ENCODE measurements at regions of chr13 and their contacts with region 1.

Region 1: GRCh38 chr13:77480066-77480465 is 55.4 kb upstream of the SCEL start:
- DNase-seq: no peak
- ATAC-seq: no peak
- H3K4me3 ChIP-seq: no peak overlapping the region
- H3K4me3 Mint-ChIP-seq: no peak overlapping the region
- H3K27ac ChIP-seq: no peak overlapping the region
- H3K27ac Mint-ChIP-seq: no peak overlapping the region
- H3K4me1 ChIP-seq: no peaks in the 10 kb centered on the region
- H3K4me1 Mint-ChIP-seq: peaks cover 10% of the 10 kb centered on the region
- H3K27me3 ChIP-seq: no peaks in the 10 kb centered on the region
- H3K27me3 Mint-ChIP-seq: no peaks in the 10 kb centered on the region
- CTCF ChIP-seq: no peak

Region 2: GRCh38 chr13:77124423-77124822 is 355.6 kb before region 1 on chr13:
- CTCF ChIA-PET with region 1: no interaction called
- POLR2A ChIA-PET with region 1: no interaction called
- intact Hi-C with region 1: loop called in 1 of 2 experiments (anchors 5 kb)
- DNase-seq: no peak
- ATAC-seq: no peak
- H3K4me3 ChIP-seq: no peak overlapping the region
- H3K4me3 Mint-ChIP-seq: no peak overlapping the region
- H3K27ac ChIP-seq: no peak overlapping the region
- H3K27ac Mint-ChIP-seq: no peak overlapping the region
- H3K4me1 ChIP-seq: no peaks in the 10 kb centered on the region
- H3K4me1 Mint-ChIP-seq: no peaks in the 10 kb centered on the region
- H3K27me3 ChIP-seq: no peaks in the 10 kb centered on the region
- H3K27me3 Mint-ChIP-seq: no peaks in the 10 kb centered on the region
- CTCF ChIP-seq: no peak

Region 3: DNA sequence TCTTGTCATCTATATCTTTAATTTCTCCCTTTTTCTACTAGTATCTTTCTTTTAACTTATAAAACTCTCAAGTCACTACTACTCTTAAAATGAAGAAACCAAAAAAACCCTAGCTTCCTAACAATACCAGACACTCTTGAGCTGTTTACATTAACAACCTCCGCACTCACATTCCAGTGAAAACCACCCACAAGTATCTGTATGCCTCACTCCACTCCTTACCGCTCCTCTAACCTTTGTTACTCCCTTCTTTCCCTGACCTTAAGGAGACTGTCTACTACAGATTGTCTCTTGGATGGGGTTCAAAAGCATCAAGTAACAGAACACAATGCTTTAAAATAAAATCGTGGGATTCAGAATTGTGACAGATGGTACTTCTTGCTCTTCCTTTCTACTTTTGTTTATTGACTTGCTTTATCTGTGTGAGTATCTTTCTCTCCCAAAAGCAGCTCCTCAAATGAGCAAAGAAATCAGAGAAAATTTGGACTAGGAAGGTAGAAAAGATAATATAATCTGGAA is 343.1 kb before region 1 on chr13:
- CTCF ChIA-PET with region 1: no interaction called
- POLR2A ChIA-PET with region 1: no interaction called
- intact Hi-C with region 1: no loop called
- DNase-seq: no peak
- ATAC-seq: no peak
- H3K4me3 ChIP-seq: no peak overlapping the region
- H3K4me3 Mint-ChIP-seq: no peak overlapping the region
- H3K27ac ChIP-seq: no peak overlapping the region
- H3K27ac Mint-ChIP-seq: peak overlapping the region; percentile 2
- H3K4me1 ChIP-seq: no peaks in the 10 kb centered on the region
- H3K4me1 Mint-ChIP-seq: no peaks in the 10 kb centered on the region
- H3K27me3 ChIP-seq: no peaks in the 10 kb centered on the region
- H3K27me3 Mint-ChIP-seq: no peaks in the 10 kb centered on the region
- CTCF ChIP-seq: no peak

Region 4: GRCh38 chr13:77184455-77184854 is 295.6 kb before region 1 on chr13:
- CTCF ChIA-PET with region 1: interaction called, 12 read pairs
- POLR2A ChIA-PET with region 1: no interaction called
- intact Hi-C with region 1: loop called in 1 of 2 experiments (anchors 5 kb)
- DNase-seq: peak in 1 of 9 experiments; percentile 5
- ATAC-seq: peak; percentile 20
- H3K4me3 ChIP-seq: no peak overlapping the region
- H3K4me3 Mint-ChIP-seq: no peak overlapping the region
- H3K27ac ChIP-seq: no peak overlapping the region
- H3K27ac Mint-ChIP-seq: peak overlapping the region; percentile 75
- H3K4me1 ChIP-seq: no peaks in the 10 kb centered on the region
- H3K4me1 Mint-ChIP-seq: peaks cover 18% of the 10 kb centered on the region
- H3K27me3 ChIP-seq: no peaks in the 10 kb centered on the region
- H3K27me3 Mint-ChIP-seq: no peaks in the 10 kb centered on the region
- CTCF ChIP-seq: no peak

Region 5: GRCh38 chr13:77274126-77274525 is 205.9 kb before region 1 on chr13:
- CTCF ChIA-PET with region 1: interaction called, 17 read pairs
- POLR2A ChIA-PET with region 1: no interaction called
- intact Hi-C with region 1: loop called (anchors 1 to 2 kb)
- DNase-seq: peak in 1 of 9 experiments; percentile 20
- ATAC-seq: no peak
- H3K4me3 ChIP-seq: no peak overlapping the region
- H3K4me3 Mint-ChIP-seq: no peak overlapping the region
- H3K27ac ChIP-seq: no peak overlapping the region
- H3K27ac Mint-ChIP-seq: peak overlapping the region; percentile 66
- H3K4me1 ChIP-seq: no peaks in the 10 kb centered on the region
- H3K4me1 Mint-ChIP-seq: peaks cover 17% of the 10 kb centered on the region
- H3K27me3 ChIP-seq: no peaks in the 10 kb centered on the region
- H3K27me3 Mint-ChIP-seq: no peaks in the 10 kb centered on the region
- CTCF ChIP-seq: peak; percentile 18

Region 6: GRCh38 chr13:77374786-77375185 is 105.3 kb before region 1 on chr13:
- CTCF ChIA-PET with region 1: no interaction called
- POLR2A ChIA-PET with region 1: no interaction called
- intact Hi-C with region 1: no loop called
- DNase-seq: no peak
- ATAC-seq: no peak
- H3K4me3 ChIP-seq: no peak overlapping the region
- H3K4me3 Mint-ChIP-seq: no peak overlapping the region
- H3K27ac ChIP-seq: no peak overlapping the region
- H3K27ac Mint-ChIP-seq: no peak overlapping the region
- H3K4me1 ChIP-seq: no peaks in the 10 kb centered on the region
- H3K4me1 Mint-ChIP-seq: no peaks in the 10 kb centered on the region
- H3K27me3 ChIP-seq: no peaks in the 10 kb centered on the region
- H3K27me3 Mint-ChIP-seq: no peaks in the 10 kb centered on the region
- CTCF ChIP-seq: no peak

Region 7: GRCh38 chr13:77751513-77752456 is 271.7 kb after region 1 on chr13:
- CTCF ChIA-PET with region 1: interaction called, 4 read pairs
- POLR2A ChIA-PET with region 1: no interaction called
- intact Hi-C with region 1: loop called (anchors 5 kb)
- DNase-seq: peak in 8 of 9 experiments; percentile 12 to 80 (median 38)
- ATAC-seq: peak; percentile 94
- H3K4me3 ChIP-seq: no peak overlapping the region
- H3K4me3 Mint-ChIP-seq: no peak overlapping the region
- H3K27ac ChIP-seq: no peak overlapping the region
- H3K27ac Mint-ChIP-seq: no peak overlapping the region
- H3K4me1 ChIP-seq: no peaks in the 10 kb centered on the region
- H3K4me1 Mint-ChIP-seq: peaks cover 20% of the 10 kb centered on the region
- H3K27me3 ChIP-seq: no peaks in the 10 kb centered on the region
- H3K27me3 Mint-ChIP-seq: no peaks in the 10 kb centered on the region
- CTCF ChIP-seq: peak; percentile 93